Left colon (tissue), 2 donors: ENCODE measurements at regions of chr15 and their contacts with region 1.

Region 1: GRCh38 chr15:23877502-23878412 is 190.7 kb upstream of the NDN start:
- DNase-seq: peak; percentile 34 to 59
- ATAC-seq: peak; percentile 93

Region 2: DNA sequence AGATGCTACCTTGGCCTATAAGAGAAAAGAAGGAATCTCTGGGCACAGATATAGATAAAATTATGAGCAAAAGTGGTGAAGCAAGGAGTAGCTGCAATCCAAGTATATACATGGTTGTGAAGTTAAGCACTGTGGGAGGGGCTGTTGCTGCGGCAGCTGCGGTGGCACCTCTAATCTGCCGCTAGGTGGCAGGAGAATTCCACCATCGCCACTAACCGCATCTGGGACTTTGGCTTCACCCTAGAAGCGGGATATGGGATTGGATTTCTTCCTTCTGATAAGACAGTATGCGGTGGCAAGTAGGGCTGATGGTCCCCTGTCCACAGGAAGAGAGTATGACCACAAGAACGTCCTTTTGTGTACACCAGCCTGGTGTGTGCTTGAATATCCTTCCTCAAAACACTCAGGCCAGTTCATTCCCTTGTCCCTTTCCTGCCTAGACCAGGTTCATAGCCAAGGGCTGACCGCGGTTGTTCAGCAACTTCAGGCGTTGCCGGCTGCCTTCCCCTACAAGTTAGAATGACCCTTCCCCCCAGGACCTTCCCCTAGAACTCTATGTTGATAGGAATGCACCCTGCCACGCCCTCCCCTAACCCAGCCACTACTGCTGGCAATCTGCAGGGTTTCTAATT is 235.2 kb before region 1 on chr15:
- intact Hi-C with region 1: loop called in 1 of 2 experiments (anchors 10 kb)
- DNase-seq: peak; percentile 42 to 63
- ATAC-seq: peak; percentile 91